BJ (cell line): ENCODE measurements at regions of chr1 and their contacts with region 1.

Region 1: DNA sequence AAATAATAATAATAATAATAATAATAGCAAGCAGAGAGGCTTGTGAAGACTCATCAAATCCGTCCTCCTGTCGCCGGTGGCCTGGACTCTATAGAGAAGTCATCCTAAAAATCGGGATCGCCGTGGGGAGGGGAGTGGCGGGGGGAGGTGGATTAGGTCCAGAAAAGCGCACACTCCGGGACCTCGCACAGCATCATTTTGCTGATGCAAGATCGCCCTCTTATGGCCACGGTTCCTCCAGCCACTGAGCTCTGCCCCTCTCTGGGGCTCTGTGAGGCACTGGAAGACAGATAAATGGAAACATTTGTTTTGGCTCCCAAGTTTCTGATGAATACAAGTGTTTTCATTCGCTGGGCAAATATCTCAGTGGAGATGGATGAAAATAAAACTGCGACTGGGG is 612.0 kb downstream of the MATN1 start:
- DNase-seq: no peak
- H3K4me3 ChIP-seq: no peak overlapping the region
- H3K27me3 ChIP-seq: peaks cover 11% of the 10 kb centered on the region
- CTCF ChIP-seq: peak; percentile 75

Region 2: GRCh38 chr1:29793101-29793546 is 318.3 kb before region 1 on chr1:
- CTCF ChIA-PET with region 1: interaction called, 11 read pairs
- POLR2A ChIA-PET with region 1: no interaction called
- DNase-seq: peak; percentile 15
- H3K4me3 ChIP-seq: no peak overlapping the region
- H3K27me3 ChIP-seq: no peaks in the 10 kb centered on the region
- CTCF ChIP-seq: peak; percentile 89

Region 3: DNA sequence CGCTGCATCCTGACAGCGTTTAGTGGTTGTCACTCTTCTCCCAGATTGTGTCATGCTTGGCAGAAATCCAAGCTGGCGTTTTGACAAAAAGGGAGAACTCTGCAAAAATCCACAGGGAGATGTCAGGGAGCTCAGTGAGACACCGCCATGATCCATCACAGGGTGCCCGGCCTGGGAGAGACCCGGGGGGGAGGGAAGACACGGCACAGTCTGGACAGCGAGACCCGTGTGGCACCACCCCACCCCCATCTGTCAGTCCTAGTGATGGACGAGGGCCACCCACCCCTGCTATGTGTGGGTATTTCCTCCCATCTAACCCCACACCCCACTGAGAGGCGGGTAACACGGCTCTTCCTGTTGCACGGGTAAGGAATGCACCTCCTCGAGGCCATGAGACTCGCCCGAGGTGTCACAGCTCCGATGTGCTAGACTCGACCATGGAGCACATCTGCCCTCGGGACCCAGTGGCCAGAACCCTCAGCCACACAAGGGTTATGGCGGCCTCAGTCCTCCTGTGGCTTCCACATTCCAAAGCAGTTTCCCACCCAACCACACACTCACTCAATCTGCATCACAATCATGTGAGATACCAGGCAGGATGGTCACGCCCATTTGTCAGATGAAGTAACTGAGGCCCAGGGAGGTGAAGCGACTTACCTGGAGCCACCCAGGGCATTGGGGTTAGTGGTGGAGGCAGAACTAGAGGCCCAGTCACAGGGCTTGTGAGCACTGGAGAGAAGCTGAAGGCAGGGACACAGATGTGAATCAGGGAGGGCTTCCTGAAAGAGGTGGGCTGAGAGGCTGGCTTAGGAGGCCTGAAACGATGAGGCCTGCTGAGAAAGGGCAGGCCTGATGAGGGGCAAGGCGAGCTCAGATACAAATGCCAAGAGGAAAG is 76.6 kb before region 1 on chr1:
- CTCF ChIA-PET with region 1: no interaction called
- POLR2A ChIA-PET with region 1: no interaction called
- DNase-seq: no peak
- H3K4me3 ChIP-seq: no peak overlapping the region
- H3K27me3 ChIP-seq: no peaks in the 10 kb centered on the region
- CTCF ChIP-seq: no peak